ENCODE measurements at regions of chr22 and their contacts with region 1.

Region 1: DNA sequence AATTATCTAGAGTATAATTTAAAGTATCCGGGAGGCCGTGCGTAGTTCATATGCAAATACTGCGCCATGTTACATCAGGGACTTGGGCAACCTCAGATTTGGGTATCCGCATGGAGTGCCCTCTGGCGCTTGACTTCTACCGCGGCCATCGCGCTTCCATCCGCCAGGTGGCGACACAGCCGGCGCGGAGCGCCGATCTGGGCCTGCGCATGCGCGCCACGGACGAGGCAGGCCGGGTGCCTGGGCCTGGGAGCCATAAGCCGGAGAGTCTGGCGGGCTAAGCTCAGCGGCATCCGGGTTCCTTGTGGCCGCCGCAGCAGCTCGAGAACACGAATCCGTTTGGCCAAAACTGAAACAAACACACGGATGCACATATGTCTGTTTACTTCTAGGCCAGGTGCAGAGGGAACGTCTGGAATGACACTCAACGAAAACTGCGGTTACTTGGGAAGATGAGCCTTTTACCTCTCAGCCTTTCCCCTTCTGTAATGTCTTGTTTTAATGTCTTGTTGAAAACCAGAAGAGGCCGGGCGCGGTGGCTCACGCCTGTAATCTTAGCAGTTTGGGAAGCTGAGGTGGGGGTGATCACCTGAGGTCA is 21.9 kb downstream of the SNU13 start:
- DNase-seq: peak; percentile 91
- H3K4me3 Mint-ChIP-seq: peak overlapping the region; percentile 64
- H3K27ac Mint-ChIP-seq: peak overlapping the region; percentile 93
- H3K4me1 Mint-ChIP-seq: peaks cover 5% of the 10 kb centered on the region
- H3K27me3 Mint-ChIP-seq: no peaks in the 10 kb centered on the region
- CTCF ChIP-seq: peak; percentile 92

Region 2: GRCh38 chr22:41682033-41682807 is 15.5 kb after region 1 on chr22:
- CTCF ChIA-PET with region 1: interaction called, 7 read pairs
- POLR2A ChIA-PET with region 1: interaction called, 35 read pairs
- intact Hi-C with region 1: loop called (anchors 2 kb)
- DNase-seq: peak; percentile 85
- H3K4me3 Mint-ChIP-seq: peak overlapping the region; percentile 87
- H3K27ac Mint-ChIP-seq: peak overlapping the region; percentile 90
- H3K4me1 Mint-ChIP-seq: peaks cover 18% of the 10 kb centered on the region
- H3K27me3 Mint-ChIP-seq: no peaks in the 10 kb centered on the region
- CTCF ChIP-seq: no peak

Region 3: DNA sequence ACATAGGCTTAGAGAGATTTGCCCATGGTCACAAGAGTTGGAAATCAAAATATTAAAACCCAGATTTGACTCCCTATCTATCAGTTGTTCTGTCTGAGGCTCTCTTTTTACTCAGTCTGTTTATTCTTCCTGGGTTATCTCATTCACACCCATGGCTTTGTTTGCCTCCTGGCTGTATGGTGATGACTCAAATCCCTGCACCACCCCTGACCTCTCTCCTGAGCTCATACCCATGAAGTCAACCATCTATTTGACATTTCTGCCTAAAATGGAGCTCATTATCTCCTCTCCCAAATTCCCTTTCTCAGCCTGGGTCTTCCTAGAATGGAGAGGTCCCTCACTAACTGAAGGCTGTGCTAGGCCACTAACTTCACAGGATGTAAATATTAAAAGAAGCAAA is 105.9 kb after region 1 on chr22:
- CTCF ChIA-PET with region 1: no interaction called
- POLR2A ChIA-PET with region 1: no interaction called
- intact Hi-C with region 1: no loop called
- DNase-seq: peak; percentile 27
- H3K4me3 Mint-ChIP-seq: no peak overlapping the region
- H3K27ac Mint-ChIP-seq: no peak overlapping the region
- H3K4me1 Mint-ChIP-seq: peaks cover 4% of the 10 kb centered on the region
- H3K27me3 Mint-ChIP-seq: no peaks in the 10 kb centered on the region
- CTCF ChIP-seq: no peak

Measured in MCF 10A (cell line).